ENCODE measurements at regions of chr1 and their contacts with region 1.

Region 1: GRCh38 chr1:175146529-175147213 is 45.9 kb downstream of the KIAA0040 start:
- DNase-seq: peak; percentile 68 to 70
- H3K4me3 ChIP-seq: no peak overlapping the region
- H3K4me3 Mint-ChIP-seq: no peak overlapping the region
- H3K27ac Mint-ChIP-seq: no peak overlapping the region
- H3K4me1 ChIP-seq: peaks cover 8% of the 10 kb centered on the region; the same call in 1 of the 2 replicates
- H3K4me1 Mint-ChIP-seq: no peaks in the 10 kb centered on the region
- H3K27me3 ChIP-seq: no peaks in the 10 kb centered on the region
- H3K27me3 Mint-ChIP-seq: no peaks in the 10 kb centered on the region
- CTCF ChIP-seq: peak; percentile 75 to 79

Region 2: DNA sequence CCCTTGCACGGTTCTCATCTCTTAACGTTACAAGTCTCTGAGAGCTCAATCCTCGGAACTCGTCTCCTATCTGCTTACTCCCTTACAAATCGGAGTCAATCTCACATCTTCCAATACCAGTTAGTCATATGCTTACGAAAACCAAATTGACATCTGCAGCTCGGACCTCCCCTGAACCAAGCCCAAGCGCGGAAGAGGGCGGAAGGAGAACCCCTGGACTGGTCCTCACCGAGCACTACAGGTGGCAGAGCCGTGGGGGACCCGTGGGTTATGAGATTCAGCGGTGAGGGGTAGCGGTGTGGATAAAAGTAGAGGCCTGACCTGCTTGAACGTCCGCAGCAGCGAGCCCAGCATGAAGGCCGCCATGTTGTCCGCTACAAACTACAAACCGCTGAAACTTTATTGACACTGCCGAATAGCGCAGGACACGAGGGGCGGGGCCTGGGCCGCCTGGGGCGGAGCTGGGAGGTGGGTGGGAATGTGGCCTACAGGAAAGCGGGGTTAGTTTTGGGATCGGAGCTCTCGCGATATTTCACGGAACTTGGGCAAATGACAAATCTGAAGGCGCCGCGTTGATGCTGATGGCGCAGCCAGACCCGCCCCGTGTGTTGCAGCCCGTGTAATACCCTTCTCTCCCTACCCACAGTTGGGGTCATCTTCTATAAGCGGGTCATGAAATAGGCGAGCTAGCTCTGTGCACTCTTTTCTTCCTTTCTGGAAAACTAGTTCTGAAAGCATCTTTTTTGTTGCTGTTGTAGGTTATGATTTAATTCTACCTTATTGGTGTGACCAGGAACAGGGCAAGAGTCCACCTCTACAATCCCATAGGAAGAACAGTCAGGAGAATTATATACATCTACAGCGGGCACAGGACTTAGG is 123.4 kb before region 1 on chr1 and contains the start of gene MRPS14:
- CTCF ChIA-PET with region 1: interaction called, 11 read pairs
- POLR2A ChIA-PET with region 1: no interaction called
- intact Hi-C with region 1: no loop called
- DNase-seq: peak; percentile 98 to 99
- H3K4me3 ChIP-seq: peak within 1 kb of the TSS; percentile 66
- H3K4me3 Mint-ChIP-seq: peak within 1 kb of the TSS; percentile 88
- H3K27ac Mint-ChIP-seq: peak within 1 kb of the TSS; percentile 75
- H3K4me1 ChIP-seq: no peaks in the 10 kb centered on the region
- H3K4me1 Mint-ChIP-seq: peaks cover 18% of the 10 kb centered on the region
- H3K27me3 ChIP-seq: no peaks in the 10 kb centered on the region
- H3K27me3 Mint-ChIP-seq: no peaks in the 10 kb centered on the region
- CTCF ChIP-seq: no peak
- total RNA-seq, gene MRPS14: 35.3 and 38.1 TPM in 2 replicates

Region 3: GRCh38 chr1:175116903-175117302 is 29.8 kb before region 1 on chr1:
- CTCF ChIA-PET with region 1: no interaction called
- POLR2A ChIA-PET with region 1: no interaction called
- intact Hi-C with region 1: no loop called
- DNase-seq: no peak
- H3K4me3 ChIP-seq: no peak overlapping the region
- H3K4me3 Mint-ChIP-seq: no peak overlapping the region
- H3K27ac Mint-ChIP-seq: no peak overlapping the region
- H3K4me1 ChIP-seq: no peaks in the 10 kb centered on the region
- H3K4me1 Mint-ChIP-seq: no peaks in the 10 kb centered on the region
- H3K27me3 ChIP-seq: no peaks in the 10 kb centered on the region
- H3K27me3 Mint-ChIP-seq: no peaks in the 10 kb centered on the region
- CTCF ChIP-seq: no peak

Region 4: DNA sequence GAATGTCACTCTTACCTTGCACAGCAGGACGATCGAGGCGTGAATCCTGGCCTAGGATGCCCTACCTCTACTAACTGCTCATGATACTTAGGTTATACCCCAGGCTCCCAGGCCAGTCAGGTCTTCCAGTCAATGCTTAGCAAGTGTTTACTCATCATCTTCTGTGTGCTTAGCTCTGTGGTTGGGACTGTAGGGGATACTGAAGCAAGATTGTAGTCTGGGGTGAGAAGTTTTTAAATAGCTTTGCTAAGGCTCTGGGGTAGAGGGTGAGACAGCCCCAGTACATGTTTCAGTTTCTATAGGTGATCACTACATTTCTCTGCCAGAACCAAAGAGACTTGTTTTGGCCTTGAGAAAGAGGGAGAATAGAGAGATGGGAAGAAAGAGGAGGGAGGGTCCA is 296.7 kb after region 1 on chr1:
- CTCF ChIA-PET with region 1: no interaction called
- POLR2A ChIA-PET with region 1: no interaction called
- intact Hi-C with region 1: no loop called
- DNase-seq: no peak
- H3K4me3 ChIP-seq: no peak overlapping the region
- H3K4me3 Mint-ChIP-seq: no peak overlapping the region
- H3K27ac Mint-ChIP-seq: no peak overlapping the region
- H3K4me1 ChIP-seq: no peaks in the 10 kb centered on the region
- H3K4me1 Mint-ChIP-seq: no peaks in the 10 kb centered on the region
- H3K27me3 ChIP-seq: no peaks in the 10 kb centered on the region
- H3K27me3 Mint-ChIP-seq: peaks cover 20% of the 10 kb centered on the region
- CTCF ChIP-seq: no peak